ENCODE measurements at regions of chr21 and their contacts with region 1.

Region 1: DNA sequence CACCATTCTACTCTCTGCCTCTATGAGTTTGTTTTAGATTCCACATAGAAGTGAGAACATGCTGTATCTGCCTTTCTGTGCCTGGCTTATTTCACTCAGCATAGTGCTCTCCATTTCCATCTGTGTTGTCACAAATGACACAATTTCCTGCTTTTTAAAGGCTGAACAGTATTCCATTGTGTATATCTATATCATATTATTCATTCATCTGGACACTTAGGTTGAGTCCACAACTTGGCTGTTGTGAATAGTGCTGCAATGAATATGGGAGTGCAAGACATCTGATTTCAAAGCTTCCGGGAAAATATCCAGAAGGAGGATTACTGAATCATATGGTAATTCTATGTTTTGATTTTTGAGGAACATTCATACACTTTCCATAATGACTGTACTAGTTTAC is 20.1 kb upstream of the DONSON start:
- DNase-seq: peak; percentile 75
- H3K4me3 ChIP-seq: no peak overlapping the region
- H3K27ac ChIP-seq: peak overlapping the region; percentile 70
- H3K4me1 ChIP-seq: peaks cover 11% of the 10 kb centered on the region
- H3K27me3 ChIP-seq: no peaks in the 10 kb centered on the region
- CTCF ChIP-seq: no peak
- POLR2A ChIP-seq: no peak

Region 2: DNA sequence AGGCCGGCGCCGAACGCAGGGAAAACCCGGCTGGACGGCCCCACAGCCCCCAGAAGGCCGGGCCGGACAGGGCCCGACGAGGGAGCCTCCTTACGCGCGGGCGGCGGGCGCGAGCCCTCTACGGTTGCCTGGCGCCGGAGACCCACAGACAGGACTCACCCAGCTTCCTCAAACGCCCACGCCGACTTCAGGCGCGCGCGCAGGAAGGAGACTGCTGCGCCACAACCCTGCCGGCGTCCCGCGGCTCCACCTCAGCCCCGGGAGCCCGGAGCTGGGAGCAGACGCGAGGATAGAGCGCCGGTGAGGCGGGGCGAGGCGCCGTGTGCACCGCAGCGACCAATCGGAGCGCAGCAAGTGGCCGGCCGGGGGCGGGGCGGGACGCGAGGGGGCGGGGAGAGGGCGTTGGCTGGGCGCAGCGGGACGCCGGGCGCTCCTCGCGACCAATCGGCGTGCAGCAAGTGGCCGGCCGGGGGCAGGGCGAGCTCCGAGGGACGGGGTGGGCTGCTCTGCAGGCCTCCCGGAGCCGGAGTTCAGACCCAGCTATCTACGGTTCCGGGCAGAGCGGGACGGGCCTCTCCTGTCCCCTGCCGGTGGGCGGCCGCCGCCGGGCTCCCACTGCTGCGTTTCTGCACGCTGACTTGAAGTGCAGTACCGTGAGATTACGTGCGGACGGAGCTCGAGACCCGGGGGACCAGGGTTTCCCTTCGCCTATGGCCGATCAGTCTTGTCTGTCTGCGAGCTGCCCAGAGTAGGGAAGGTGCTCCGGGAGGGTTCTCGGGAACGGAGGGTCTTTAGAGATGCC is 128.7 kb before region 1 on chr21 and contains the start of gene TMEM50B:
- CTCF ChIA-PET with region 1: interaction called, 14 read pairs
- POLR2A ChIA-PET with region 1: no interaction called
- dilution Hi-C with region 1: no loop called
- intact Hi-C with region 1: no loop called
- DNase-seq: peak; percentile 98
- H3K4me3 ChIP-seq: peak within 1 kb of the TSS; percentile 83 to 95 (median 91)
- H3K27ac ChIP-seq: peak within 1 kb of the TSS; percentile 72
- H3K4me1 ChIP-seq: peaks cover 4% of the 10 kb centered on the region
- H3K27me3 ChIP-seq: peaks cover 3% of the 10 kb centered on the region in 2 experiments
- CTCF ChIP-seq: peak; percentile 27 to 59
- POLR2A ChIP-seq: peak; percentile 94
- total RNA-seq, gene TMEM50B: 29.3 and 29.7 TPM in 2 replicates

Region 3: GRCh38 chr21:33566514-33566913 is 42.0 kb before region 1 on chr21:
- CTCF ChIA-PET with region 1: interaction called, 39 read pairs
- POLR2A ChIA-PET with region 1: no interaction called
- dilution Hi-C with region 1: no loop called
- intact Hi-C with region 1: no loop called
- DNase-seq: no peak
- H3K4me3 ChIP-seq: no peak overlapping the region
- H3K27ac ChIP-seq: no peak overlapping the region
- H3K4me1 ChIP-seq: no peaks in the 10 kb centered on the region
- H3K27me3 ChIP-seq: no peaks in the 10 kb centered on the region
- CTCF ChIP-seq: no peak
- POLR2A ChIP-seq: no peak

Region 4: DNA sequence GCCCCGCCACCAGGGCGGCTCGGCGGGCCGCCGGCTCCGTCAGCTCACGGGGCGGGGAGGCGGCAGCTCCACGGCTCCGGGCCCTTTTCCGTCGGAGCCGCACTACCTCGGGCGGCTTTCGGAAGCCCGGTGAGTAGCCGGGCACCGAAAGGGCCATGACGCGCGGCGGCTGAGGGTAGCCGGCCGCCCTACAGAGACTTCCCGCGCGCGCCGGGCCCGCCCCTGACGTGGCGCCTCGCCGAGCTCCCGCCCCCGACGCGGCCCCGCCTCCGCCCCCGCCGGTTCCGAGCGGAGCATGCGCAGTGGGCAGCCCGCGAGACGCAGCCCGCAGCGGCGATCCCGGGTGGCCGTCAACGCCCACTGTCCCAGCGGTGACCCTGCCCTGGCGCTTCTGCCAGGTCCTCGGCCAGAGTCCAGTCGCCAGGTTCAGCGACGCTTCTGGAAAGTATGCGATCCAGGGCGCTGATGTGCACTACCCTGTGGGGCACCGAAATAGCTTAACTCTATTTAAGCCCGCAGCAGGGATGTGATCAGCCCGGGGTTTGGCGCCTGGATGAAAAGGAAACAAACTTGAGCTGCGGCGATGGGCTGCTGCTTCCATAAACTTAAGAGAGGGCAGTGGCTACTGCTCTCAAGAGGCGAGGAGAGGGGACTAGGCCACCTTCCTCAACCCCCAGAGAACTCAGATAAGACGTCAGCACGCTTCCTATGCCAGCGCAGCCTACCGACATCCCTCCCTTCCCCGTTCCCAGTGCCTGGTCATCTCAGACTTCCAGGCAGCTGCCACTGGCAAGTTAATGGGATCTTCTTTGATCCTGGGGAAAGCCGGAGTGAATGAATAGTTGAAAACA is 19.8 kb before region 1 on chr21 and contains the start of gene DONSON:
- CTCF ChIA-PET with region 1: interaction called, 67 read pairs
- POLR2A ChIA-PET with region 1: interaction called, 5 read pairs
- dilution Hi-C with region 1: no loop called
- intact Hi-C with region 1: loop called (anchors 1 kb)
- DNase-seq: peak; percentile 89
- H3K4me3 ChIP-seq: peak within 1 kb of the TSS; percentile 77 to 95 (median 84)
- H3K27ac ChIP-seq: peak within 1 kb of the TSS; percentile 69
- H3K4me1 ChIP-seq: peaks cover 18% of the 10 kb centered on the region
- H3K27me3 ChIP-seq: no peaks in the 10 kb centered on the region
- CTCF ChIP-seq: peak in 1 of 2 donors; percentile 19
- POLR2A ChIP-seq: peak; percentile 82
- total RNA-seq, gene DONSON: 25.7 and 29.4 TPM in 2 replicates

Region 5: DNA sequence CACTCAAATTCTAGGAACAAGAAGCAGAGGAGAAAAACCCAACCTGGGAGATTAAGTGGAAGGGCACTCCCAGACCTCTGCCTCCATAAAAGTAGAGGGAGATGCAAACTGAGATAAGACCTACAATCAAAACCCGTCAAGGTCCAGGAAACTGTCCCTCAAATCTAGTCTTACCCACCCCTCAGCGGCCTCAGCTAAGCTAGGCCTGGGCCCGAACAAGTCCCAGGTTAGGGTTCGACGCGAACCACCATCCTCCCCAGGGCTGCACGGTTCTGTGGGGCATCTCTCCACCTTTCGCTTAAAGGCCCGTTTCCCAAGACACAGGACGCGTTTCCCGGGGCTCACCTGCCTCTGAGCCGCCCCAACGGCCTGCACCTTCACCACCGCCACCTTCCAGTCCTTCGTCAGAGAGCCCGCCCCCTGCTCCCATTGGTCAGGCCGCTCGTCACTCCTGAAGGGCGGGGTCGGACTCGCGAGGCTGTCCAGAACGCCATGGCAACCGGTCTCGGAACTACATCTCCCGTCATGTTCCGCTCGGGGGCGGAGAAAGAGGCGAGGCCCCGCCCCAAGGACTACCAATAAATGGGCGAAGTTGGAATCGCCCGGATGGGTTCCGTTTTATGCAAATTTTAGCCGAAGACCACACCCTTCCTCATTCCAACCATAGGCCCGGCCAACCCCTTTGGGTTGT is 32.9 kb after region 1 on chr21 and contains the start of gene CRYZL1:
- CTCF ChIA-PET with region 1: interaction called, 4 read pairs
- POLR2A ChIA-PET with region 1: no interaction called
- dilution Hi-C with region 1: no loop called
- intact Hi-C with region 1: loop called (anchors 1 kb)
- DNase-seq: peak; percentile 99
- H3K4me3 ChIP-seq: peak within 1 kb of the TSS; percentile 54 to 84 (median 76)
- H3K27ac ChIP-seq: peak within 1 kb of the TSS; percentile 66
- H3K4me1 ChIP-seq: peaks cover 19% of the 10 kb centered on the region
- H3K27me3 ChIP-seq: no peaks in the 10 kb centered on the region
- CTCF ChIP-seq: no peak
- POLR2A ChIP-seq: peak; percentile 62
- total RNA-seq, gene CRYZL1: 41.1 and 42.1 TPM in 2 replicates

Region 6: DNA sequence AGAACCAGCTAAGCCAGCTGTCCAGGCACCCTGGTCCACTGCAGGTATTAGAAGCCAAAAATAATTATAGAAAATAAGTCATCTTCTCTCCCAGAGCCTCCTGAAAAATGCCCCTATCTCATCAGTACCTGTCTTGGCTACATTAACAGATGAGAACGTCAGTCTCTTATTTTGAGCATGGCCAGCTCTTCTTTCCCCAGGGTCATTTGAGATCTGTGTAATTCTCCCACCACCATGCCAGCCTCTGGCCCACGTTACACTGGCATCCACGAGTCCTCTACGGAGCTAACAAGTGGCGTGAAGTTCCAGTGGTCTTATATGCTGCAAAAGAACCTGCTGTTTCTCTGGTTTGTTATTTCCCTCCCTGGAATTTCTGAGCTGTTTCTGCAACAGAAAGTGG is 189.0 kb after region 1 on chr21:
- CTCF ChIA-PET with region 1: interaction called, 12 read pairs
- POLR2A ChIA-PET with region 1: no interaction called
- dilution Hi-C with region 1: no loop called
- intact Hi-C with region 1: no loop called
- DNase-seq: no peak
- H3K4me3 ChIP-seq: no peak overlapping the region
- H3K27ac ChIP-seq: no peak overlapping the region
- H3K4me1 ChIP-seq: no peaks in the 10 kb centered on the region
- H3K27me3 ChIP-seq: no peaks in the 10 kb centered on the region
- CTCF ChIP-seq: no peak
- POLR2A ChIP-seq: no peak